ENCODE measurements at regions of chr18 and their contacts with region 1.

Region 1: GRCh38 chr18:68660354-68661183 is 54.3 kb downstream of the TMX3 start:
- DNase-seq: peak in 1 of 2 donors; percentile 64
- H3K4me3 ChIP-seq: no peak overlapping the region
- H3K27ac ChIP-seq: no peak overlapping the region
- H3K4me1 ChIP-seq: no peaks in the 10 kb centered on the region
- H3K27me3 ChIP-seq: no peaks in the 10 kb centered on the region
- CTCF ChIP-seq: peak in 5 of 7 experiments; percentile 31 to 59 (median 35)
- EP300 ChIP-seq: no peak
- POLR2A ChIP-seq: no peak

Region 2: DNA sequence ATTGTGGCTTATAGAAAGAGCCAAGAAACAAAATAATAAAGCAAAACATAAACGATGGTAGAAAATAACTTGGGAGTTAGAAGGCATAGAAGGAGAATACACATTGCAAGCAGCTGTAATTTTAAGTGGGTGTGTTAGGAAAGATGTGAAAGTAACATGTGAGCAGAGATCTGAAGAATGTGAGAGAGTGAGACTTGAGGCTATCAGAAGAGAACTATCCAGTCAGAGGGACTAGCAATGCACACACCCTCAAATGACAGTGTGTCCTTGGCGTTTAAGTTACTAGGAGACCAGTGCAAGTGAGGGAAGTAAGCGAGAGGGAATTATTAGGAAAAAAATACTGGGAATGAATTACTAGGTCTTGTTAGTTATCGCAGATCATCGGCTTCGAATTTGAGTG is 1448.9 kb before region 1 on chr18:
- intact Hi-C with region 1: loop called (anchors 5 kb)
- DNase-seq: no peak
- H3K4me3 ChIP-seq: no peak overlapping the region
- H3K27ac ChIP-seq: no peak overlapping the region
- H3K4me1 ChIP-seq: no peaks in the 10 kb centered on the region
- H3K27me3 ChIP-seq: peaks cover 0 to 5% (median 0%) of the 10 kb centered on the region in 3 donors
- CTCF ChIP-seq: no peak
- EP300 ChIP-seq: no peak
- POLR2A ChIP-seq: no peak

Region 3: DNA sequence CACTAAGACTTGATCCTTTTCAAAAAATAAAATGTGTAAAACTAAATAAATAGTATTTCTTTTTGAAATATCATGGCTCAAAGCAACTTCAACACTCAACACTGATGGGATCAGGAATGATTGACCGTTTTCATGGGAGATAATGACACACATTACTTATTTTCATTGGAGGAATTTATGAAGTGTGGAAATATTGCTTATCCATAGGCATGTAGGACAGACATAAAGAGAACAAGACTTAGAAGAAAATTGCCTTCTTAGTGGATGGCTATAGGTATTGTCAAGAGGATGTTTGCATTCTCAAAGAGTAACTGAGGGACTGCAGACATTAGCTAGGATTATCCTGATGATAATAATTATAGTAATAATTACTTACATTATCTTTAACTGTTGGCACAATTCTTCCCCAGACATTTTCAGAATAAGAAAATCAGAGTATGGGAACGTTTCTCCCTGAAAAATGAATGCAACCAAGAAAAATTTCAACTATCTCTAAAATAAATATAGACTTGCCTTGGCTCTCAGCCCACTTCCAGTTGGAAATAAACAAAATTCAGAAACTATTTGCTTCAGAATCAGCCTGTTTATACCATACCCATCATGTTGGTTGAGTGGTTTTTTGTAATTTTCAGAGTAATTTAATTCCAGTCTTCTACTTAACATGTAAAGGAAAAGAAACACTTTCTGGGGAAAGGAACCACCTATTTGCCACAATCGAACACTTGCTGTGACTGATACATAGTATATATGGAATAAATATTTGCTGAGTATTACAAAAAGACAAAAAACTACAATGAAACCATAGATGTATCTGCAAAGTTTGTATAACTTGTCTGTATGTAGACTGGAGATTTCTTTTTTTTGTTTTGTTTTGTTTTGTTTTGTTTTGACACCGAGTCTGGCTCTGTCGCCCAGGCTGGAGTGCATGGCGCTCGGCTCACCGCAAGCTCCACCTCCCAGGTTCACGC is 111.4 kb before region 1 on chr18:
- intact Hi-C with region 1: no loop called
- DNase-seq: peak in 1 of 2 donors; percentile 28
- H3K4me3 ChIP-seq: no peak overlapping the region
- H3K27ac ChIP-seq: no peak overlapping the region
- H3K4me1 ChIP-seq: no peaks in the 10 kb centered on the region
- H3K27me3 ChIP-seq: no peaks in the 10 kb centered on the region
- CTCF ChIP-seq: no peak
- EP300 ChIP-seq: no peak
- POLR2A ChIP-seq: no peak